ENCODE measurements at regions of chr6 and their contacts with region 1.

Region 1: GRCh38 chr6:109179507-109179906 is 84.2 kb downstream of the CEP57L1 start:
- DNase-seq: no peak
- ATAC-seq: no peak
- H3K4me3 ChIP-seq: no peak overlapping the region
- H3K4me3 Mint-ChIP-seq: no peak overlapping the region
- H3K27ac ChIP-seq: no peak overlapping the region
- H3K27ac Mint-ChIP-seq: no peak overlapping the region
- H3K4me1 ChIP-seq: no peaks in the 10 kb centered on the region
- H3K4me1 Mint-ChIP-seq: no peaks in the 10 kb centered on the region
- H3K27me3 ChIP-seq: peaks cover 0 to 9% of the 10 kb centered on the region in 2 experiments
- H3K27me3 Mint-ChIP-seq: peaks cover 22 to 44% of the 10 kb centered on the region in 2 donors

Region 2: DNA sequence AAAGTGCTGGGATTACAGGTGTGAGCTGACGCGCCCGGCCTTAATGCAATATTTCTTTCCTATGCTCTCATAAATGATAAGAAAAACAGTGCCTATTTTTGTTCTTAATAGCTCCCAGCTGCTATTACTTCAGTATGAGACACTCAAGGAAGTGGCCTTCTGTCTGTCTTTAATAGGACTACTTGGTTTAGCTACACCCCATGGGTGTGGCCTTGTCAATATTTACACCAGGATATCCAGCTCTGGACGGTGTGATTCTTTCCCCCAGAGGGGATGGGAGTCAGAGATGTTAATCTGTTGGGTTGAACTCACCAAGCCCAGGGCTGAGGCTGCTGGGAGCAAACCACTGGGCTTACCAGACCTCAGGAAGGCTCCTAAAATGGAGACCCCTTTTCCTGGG is 50.0 kb after region 1 on chr6:
- CTCF ChIA-PET with region 1: no interaction called
- POLR2A ChIA-PET with region 1: no interaction called
- DNase-seq: no peak
- ATAC-seq: no peak
- H3K4me3 ChIP-seq: no peak overlapping the region
- H3K4me3 Mint-ChIP-seq: no peak overlapping the region
- H3K27ac ChIP-seq: no peak overlapping the region
- H3K27ac Mint-ChIP-seq: no peak overlapping the region
- H3K4me1 ChIP-seq: peaks cover 0 to 2% of the 10 kb centered on the region in 2 experiments
- H3K4me1 Mint-ChIP-seq: peaks cover under 1 to 5% (median 4%) of the 10 kb centered on the region in 3 donors
- H3K27me3 ChIP-seq: no peaks in the 10 kb centered on the region
- H3K27me3 Mint-ChIP-seq: no peaks in the 10 kb centered on the region

Region 3: DNA sequence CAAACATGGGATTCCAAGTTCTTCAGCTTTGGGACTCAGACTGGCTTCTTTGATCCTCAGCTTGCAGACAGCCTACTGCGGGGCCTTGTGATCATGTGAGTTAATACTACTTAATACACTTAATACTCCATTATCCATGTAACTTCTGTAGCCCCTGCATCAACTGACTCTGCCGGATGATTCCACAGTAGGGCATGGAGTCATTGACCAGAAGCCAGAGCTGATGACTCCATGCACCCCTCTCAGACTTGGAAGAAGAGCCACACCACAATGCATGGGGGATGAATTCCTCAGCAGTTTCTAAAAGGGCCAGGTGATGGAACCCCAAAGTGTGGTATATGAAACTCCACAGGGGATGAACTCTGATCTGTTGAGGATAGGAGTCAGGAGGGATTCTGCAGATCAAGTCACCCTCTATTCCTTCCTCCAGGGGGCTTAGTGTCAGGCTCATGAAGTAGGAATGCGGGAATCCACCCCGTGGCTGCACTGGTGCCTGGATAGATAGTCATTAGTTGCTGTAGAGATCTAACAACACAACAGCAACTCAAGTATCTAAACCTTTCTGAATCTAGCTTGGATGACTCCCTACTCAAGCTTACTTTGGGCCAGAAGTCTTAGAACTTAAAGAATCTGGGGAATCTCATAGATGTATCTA is 868.8 kb after region 1 on chr6:
- CTCF ChIA-PET with region 1: no interaction called
- POLR2A ChIA-PET with region 1: interaction called in 1 of 2 experiments, 11 read pairs
- DNase-seq: no peak
- ATAC-seq: no peak
- H3K4me3 ChIP-seq: no peak overlapping the region
- H3K4me3 Mint-ChIP-seq: no peak overlapping the region
- H3K27ac ChIP-seq: no peak overlapping the region
- H3K27ac Mint-ChIP-seq: no peak overlapping the region
- H3K4me1 ChIP-seq: no peaks in the 10 kb centered on the region
- H3K4me1 Mint-ChIP-seq: no peaks in the 10 kb centered on the region
- H3K27me3 ChIP-seq: peaks cover 0 to 15% of the 10 kb centered on the region in 2 experiments
- H3K27me3 Mint-ChIP-seq: peaks cover 0 to 9% of the 10 kb centered on the region in 2 donors